Activated naive CD4-positive, alpha-beta T cell treated with anti-CD3 and anti-CD28 coated beads for 36 hours (primary cell): ENCODE measurements at regions of chr11 and their contacts with region 1.

Region 1: DNA sequence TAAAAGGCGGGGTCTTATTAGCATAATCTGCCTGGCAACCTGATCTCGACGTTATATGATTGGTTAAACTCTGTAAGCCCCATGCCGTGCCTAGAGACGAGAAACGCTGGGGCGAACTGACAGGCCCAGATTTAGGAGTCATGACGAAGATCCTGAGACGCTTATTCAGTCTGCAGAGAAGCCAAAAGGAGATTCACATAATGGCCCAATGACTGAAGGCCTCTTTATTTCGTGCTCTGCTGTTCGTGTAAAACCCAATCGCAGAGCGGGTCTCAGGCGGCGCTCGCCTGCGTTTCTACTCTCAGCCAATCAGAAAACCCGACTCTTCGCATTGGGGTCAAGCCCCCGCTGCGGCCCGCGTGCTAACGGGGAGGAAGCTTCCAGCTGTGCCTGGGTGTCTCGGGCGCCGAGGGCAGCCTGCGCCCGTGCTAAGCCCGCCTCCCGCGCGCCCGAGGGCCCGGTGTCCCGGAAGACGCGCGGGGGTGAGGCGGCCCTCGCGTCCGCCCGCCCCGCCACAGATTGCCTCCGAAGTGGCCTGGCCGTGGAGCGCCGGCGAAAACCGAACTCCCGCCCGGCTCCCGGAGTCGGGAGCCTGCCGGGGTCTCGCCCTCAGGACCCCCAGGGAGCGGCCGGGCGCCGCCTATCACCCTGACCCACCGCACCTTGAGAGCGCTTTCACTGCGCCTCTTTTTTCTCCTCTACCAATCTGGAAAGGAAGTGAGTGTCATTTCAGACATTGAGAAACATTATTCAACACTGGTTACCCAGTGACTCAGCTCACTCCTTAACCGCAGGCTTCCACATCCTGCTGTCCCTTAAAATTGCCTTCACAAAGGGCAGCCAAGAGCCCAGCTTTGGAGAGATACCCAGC is 446 bp upstream of the PRDM10 start:
- DNase-seq: peak; percentile 94
- H3K4me3 Mint-ChIP-seq: peak overlapping the region; percentile 98
- H3K27ac Mint-ChIP-seq: peak overlapping the region; percentile 100
- H3K4me1 Mint-ChIP-seq: peaks cover 28% of the 10 kb centered on the region
- H3K27me3 Mint-ChIP-seq: no peaks in the 10 kb centered on the region

Region 2: GRCh38 chr11:129279326-129280026 is 723.6 kb before region 1 on chr11:
- CTCF ChIA-PET with region 1: no interaction called
- intact Hi-C with region 1: loop called (anchors 2 kb)
- DNase-seq: peak; percentile 63
- H3K4me3 Mint-ChIP-seq: peak overlapping the region; percentile 77
- H3K27ac Mint-ChIP-seq: peak overlapping the region; percentile 85
- H3K4me1 Mint-ChIP-seq: peaks cover 35% of the 10 kb centered on the region
- H3K27me3 Mint-ChIP-seq: peaks cover 8% of the 10 kb centered on the region

Region 3: DNA sequence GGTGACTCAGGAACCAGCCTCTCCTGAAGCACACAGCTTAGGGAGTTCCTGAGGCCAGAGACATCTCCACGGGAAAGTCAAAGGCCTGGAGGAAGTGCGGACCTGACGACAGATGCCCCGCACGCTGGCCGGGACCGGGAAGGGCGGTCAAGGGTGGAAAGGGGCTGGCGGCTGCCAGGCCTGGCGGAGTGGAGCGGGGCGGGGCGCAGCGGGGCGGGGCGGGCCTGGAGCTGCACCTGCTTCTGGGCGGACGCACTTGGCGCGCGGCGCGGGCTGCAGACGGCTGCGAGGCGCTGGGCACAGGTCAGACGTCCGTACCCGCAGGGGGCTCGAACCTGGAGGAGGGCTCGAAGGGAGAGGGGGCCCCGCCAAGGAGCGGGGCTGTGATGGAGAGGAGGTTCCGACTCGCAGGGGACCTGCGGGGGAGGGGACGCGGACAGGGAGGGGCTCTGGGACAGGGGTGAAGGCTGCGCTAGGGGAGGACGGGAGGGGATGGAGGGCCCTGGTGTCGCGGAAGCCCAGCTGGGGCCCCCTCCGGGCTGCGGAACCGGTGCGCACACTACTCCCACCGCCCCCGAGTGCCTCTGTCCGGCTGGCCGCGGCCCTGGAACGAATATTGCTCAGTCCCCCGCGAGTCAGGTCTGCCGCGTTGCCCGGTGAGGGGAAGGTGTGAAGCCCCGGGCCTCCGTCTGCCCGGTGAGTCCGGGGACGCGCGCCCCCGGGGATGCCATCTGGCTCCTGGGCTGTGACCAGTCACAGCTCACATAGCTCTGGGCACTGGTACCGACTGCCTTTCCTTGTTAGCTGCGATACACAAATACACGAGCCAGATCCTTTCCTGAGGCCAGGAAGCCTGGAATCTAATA is 187.3 kb before region 1 on chr11 and contains the start of gene TMEM45B:
- CTCF ChIA-PET with region 1: no interaction called
- intact Hi-C with region 1: loop called (anchors 2 kb)
- DNase-seq: peak; percentile 39
- H3K4me3 Mint-ChIP-seq: peak within 1 kb of the TSS; percentile 79
- H3K27ac Mint-ChIP-seq: peak within 1 kb of the TSS; percentile 78
- H3K4me1 Mint-ChIP-seq: peaks cover 52% of the 10 kb centered on the region
- H3K27me3 Mint-ChIP-seq: peaks cover 2% of the 10 kb centered on the region
- total RNA-seq, gene TMEM45B: 3.8 to 3.9 TPM

Region 4: DNA sequence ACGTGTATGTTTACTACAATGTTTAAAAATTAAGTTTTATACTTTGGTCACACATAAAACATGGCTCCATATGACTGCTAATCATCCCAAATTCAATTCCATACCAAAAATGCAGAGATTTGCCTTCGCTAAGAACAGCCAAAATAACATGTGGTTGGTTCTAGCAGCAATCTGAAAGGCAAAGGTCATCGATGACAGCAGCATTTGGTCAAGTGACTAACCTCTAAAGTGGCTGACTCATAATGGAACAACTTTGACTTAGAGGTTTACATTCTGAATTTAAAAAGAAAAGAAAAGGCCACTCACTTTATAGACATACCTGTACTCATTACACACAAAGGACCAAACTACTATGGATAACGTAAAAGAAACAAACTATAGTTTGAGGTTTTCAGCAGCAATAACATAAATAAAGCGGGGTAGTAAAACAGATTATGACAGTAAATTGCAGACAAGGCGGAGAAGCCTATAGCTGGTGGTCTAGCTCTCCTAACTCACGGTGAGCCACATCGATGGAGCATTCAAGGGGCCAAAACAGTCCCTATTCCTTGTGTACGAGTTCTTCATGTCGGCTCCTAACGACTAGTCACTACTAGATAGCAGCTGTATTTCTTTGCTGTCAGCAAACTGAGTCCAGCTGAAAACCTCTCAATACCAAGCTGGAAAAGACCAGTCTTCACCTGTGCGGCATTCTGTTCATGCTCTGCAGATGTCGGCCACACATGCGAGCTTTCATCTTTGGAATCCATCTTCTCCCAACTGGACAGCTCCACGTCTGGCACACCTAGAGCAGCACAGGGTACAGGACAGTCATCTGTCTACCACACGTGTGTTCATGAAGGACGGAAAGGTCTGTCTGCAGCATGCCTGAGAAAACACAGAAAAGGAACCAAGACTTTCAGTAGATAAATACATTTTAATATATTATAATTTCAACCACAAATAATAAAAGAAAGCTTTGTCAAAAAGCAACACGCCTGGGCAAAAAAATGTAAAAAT is 42.6 kb before region 1 on chr11:
- CTCF ChIA-PET with region 1: no interaction called
- intact Hi-C with region 1: loop called (anchors 1 kb)
- DNase-seq: peak; percentile 31
- H3K4me3 Mint-ChIP-seq: no peak overlapping the region
- H3K27ac Mint-ChIP-seq: no peak overlapping the region
- H3K4me1 Mint-ChIP-seq: peaks cover 9% of the 10 kb centered on the region
- H3K27me3 Mint-ChIP-seq: no peaks in the 10 kb centered on the region

Region 5: GRCh38 chr11:130131961-130132850 is 129.1 kb after region 1 on chr11:
- CTCF ChIA-PET with region 1: interaction called, 8 read pairs
- intact Hi-C with region 1: loop called (anchors 1 kb)
- DNase-seq: peak; percentile 63
- H3K4me3 Mint-ChIP-seq: no peak overlapping the region
- H3K27ac Mint-ChIP-seq: no peak overlapping the region
- H3K4me1 Mint-ChIP-seq: no peaks in the 10 kb centered on the region
- H3K27me3 Mint-ChIP-seq: no peaks in the 10 kb centered on the region

Region 6: DNA sequence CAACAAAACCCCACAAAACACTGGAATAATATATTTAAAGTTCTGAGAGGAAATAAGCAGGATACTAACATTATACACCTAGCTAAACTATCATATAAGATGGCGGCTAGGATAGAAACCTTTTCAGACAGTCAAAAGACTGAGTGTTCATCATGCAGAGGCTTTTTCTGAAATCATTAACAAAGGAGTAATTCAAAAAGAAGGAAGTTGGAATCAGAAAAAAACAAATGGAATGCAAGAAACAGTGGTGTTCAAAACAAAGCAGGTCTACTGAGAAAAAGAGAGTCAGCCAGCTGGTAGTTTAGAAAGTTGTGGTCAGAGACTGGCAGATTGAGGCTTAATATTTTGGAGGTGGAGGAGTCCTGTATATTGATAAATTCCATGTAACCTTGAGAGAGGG is 341.8 kb after region 1 on chr11:
- CTCF ChIA-PET with region 1: no interaction called
- intact Hi-C with region 1: no loop called
- DNase-seq: no peak
- H3K4me3 Mint-ChIP-seq: no peak overlapping the region
- H3K27ac Mint-ChIP-seq: no peak overlapping the region
- H3K4me1 Mint-ChIP-seq: peaks cover 3% of the 10 kb centered on the region
- H3K27me3 Mint-ChIP-seq: no peaks in the 10 kb centered on the region